Mammary epithelial cell (primary cell): ENCODE measurements at regions of chr10 and their contacts with region 1.

Region 1: DNA sequence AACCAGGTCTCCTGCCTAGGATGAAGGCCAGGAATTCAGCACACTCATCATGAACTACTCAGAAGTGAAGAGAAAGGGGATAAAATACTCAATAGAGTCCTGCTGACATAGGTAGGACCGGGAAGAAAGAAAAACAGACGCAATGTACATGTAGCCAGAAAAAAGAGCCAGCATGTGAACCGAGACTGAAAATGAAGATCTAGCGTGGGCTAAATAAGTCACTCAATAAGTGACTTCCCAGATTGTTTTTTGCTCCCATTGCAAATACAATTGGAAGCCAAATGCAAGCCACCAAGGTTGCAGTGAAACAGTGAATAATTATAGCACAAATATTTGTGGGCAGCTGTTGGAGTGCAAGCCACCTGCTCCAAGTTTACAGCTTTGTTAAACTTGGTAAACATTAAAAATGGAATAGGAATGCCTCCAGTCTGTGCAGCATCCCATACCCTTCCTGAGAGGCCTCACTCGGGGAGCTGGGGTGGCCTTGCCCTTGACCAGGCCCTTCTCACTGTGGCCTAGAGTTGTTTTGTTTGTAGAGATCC is 34.7 kb upstream of the HPS1 start:
- DNase-seq: no peak
- H3K4me3 ChIP-seq: no peak overlapping the region
- H3K27ac ChIP-seq: no peak overlapping the region
- H3K4me1 ChIP-seq: peaks cover 4% of the 10 kb centered on the region
- H3K27me3 ChIP-seq: no peaks in the 10 kb centered on the region
- CTCF ChIP-seq: no peak

Region 2: GRCh38 chr10:98536551-98536950 is 55.1 kb after region 1 on chr10:
- CTCF ChIA-PET with region 1: no interaction called
- dilution Hi-C with region 1: loop called (anchors 5 kb)
- in situ Hi-C with region 1: no loop called
- intact Hi-C with region 1: no loop called
- DNase-seq: peak; percentile 26
- H3K4me3 ChIP-seq: no peak overlapping the region
- H3K27ac ChIP-seq: no peak overlapping the region
- H3K4me1 ChIP-seq: no peaks in the 10 kb centered on the region
- H3K27me3 ChIP-seq: no peaks in the 10 kb centered on the region
- CTCF ChIP-seq: no peak

Region 3: DNA sequence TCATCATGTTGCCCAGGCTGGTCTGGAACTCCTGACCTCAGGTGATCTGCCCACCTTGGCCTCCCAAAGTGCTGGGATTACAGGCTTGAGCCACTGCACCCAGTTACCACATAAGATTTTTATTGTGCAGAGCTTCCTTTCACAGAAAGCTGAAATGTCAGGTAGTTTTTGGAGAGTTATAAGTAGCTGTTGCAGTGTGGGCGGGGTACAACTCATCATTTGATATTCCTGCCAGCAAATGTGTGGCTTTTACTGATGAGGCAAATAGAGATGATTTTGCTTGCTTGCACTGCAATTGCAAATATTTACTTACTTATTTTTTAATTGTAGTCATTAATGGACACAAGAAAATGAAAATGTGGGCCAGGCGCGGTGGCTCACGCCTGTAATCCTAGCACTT is 1083.7 kb after region 1 on chr10:
- CTCF ChIA-PET with region 1: no interaction called
- dilution Hi-C with region 1: no loop called
- in situ Hi-C with region 1: no loop called
- intact Hi-C with region 1: no loop called
- DNase-seq: no peak
- H3K4me3 ChIP-seq: no peak overlapping the region
- H3K27ac ChIP-seq: no peak overlapping the region
- H3K4me1 ChIP-seq: no peaks in the 10 kb centered on the region
- H3K27me3 ChIP-seq: no peaks in the 10 kb centered on the region
- CTCF ChIP-seq: no peak